Activated naive CD8-positive, alpha-beta T cell treated with anti-CD3 and anti-CD28 coated beads, Interleukin-2, amount 10 ng/mL, durations not matched to agents 7 days and 5 days (primary cell): ENCODE measurements at regions of chr16 and their contacts with region 1.

Region 1: GRCh38 chr16:53545433-53545832 is 42.4 kb upstream of the AKTIP start:
- DNase-seq: peak; percentile 53
- ATAC-seq: peak; percentile 90
- H3K4me3 Mint-ChIP-seq: peak overlapping the region; percentile 62
- H3K27ac Mint-ChIP-seq: peak overlapping the region; percentile 57
- H3K4me1 Mint-ChIP-seq: peaks cover 33% of the 10 kb centered on the region
- H3K27me3 Mint-ChIP-seq: peaks cover 53% of the 10 kb centered on the region

Region 2: GRCh38 chr16:53518550-53519416 is 26.6 kb before region 1 on chr16:
- POLR2A ChIA-PET with region 1: interaction called, 11 read pairs
- DNase-seq: peak; percentile 81
- ATAC-seq: peak; percentile 86
- H3K4me3 Mint-ChIP-seq: peak overlapping the region; percentile 79
- H3K27ac Mint-ChIP-seq: peak overlapping the region; percentile 91
- H3K4me1 Mint-ChIP-seq: peaks cover 43% of the 10 kb centered on the region
- H3K27me3 Mint-ChIP-seq: peaks cover 4% of the 10 kb centered on the region